Thyroid gland (tissue), 4 donors: ENCODE measurements at regions of chr1 and their contacts with region 1.

Region 1: GRCh38 chr1:110630839-110631663 is 24.9 kb upstream of the KCNA2 start:
- DNase-seq: peak; percentile 59 to 77
- H3K4me3 ChIP-seq: no peak overlapping the region
- H3K27ac ChIP-seq: no peak overlapping the region
- H3K4me1 ChIP-seq: peaks cover 0 to 8% of the 10 kb centered on the region in 2 donors
- H3K27me3 ChIP-seq: no peaks in the 10 kb centered on the region
- CTCF ChIP-seq: peak; percentile 35 to 87 (median 67)
- POLR2A ChIP-seq: no peak

Region 2: DNA sequence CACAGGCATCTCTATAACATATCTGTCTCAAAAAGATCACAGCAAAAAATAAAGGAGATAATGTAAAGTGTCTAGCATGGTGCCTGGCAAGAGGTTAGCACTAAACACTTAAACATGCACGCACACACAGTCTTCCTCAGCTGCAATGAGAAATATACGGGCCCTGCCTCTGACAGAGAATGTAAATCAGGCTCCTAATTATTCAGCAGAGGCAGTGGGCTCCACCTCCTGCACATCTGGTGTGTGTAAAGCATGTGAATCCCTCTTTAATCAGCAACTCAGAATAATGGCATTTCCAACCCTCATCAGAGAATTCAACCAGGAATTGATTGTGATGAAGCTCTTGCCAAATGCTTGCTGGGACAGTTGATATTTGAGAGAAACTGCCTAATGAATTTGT is 129.3 kb after region 1 on chr1:
- intact Hi-C with region 1: loop called (anchors 5 kb)
- DNase-seq: no peak
- H3K4me3 ChIP-seq: no peak overlapping the region
- H3K27ac ChIP-seq: no peak overlapping the region
- H3K4me1 ChIP-seq: no peaks in the 10 kb centered on the region
- H3K27me3 ChIP-seq: no peaks in the 10 kb centered on the region
- CTCF ChIP-seq: no peak
- POLR2A ChIP-seq: no peak

Region 3: DNA sequence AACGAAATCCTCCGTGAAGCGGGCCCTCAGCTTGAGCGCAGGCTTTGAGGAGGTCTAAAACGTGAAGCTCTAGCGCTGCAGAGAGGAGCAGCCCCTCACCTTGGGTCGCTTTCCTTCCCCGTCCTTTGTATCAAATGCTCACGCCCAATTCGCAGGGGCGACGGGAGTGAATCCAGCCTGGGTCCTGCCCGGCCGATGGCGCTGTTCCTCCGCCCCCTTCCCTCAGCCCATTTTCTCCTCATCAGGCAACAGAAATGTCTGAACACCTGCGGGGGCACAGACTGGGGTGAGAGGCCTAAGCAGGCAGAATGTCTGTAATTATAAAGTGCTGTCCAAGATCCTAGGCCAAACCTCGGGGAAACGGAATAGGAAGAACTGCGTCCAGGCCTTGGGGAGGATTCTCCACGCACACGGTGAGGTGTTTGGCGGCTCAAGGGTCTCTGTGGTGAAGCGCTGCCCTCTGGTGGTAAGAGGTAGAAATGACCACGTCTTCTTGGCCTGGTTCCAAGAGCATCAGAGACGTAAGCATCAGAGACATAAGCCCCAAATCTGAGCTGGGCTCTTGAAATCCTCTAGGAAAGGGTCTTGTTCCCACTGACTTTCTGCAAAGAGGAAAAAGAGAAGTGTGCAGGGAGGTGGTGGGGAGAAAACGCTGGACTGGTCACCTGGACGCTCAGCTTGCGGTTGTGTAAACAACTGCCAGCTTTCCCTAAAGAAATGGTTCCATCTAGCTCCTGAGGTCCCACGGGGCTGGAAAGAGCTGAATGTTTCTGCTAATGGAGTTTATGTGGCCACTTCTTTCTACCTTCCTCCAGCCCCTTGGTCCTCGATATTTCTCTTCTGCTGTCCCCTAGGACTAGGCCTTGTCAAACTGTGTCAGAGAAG is 149.8 kb after region 1 on chr1:
- intact Hi-C with region 1: loop called (anchors 5 kb)
- DNase-seq: peak; percentile 58 to 67
- H3K4me3 ChIP-seq: no peak overlapping the region
- H3K27ac ChIP-seq: no peak overlapping the region
- H3K4me1 ChIP-seq: no peaks in the 10 kb centered on the region
- H3K27me3 ChIP-seq: no peaks in the 10 kb centered on the region
- CTCF ChIP-seq: peak; percentile 58 to 81 (median 78)
- POLR2A ChIP-seq: no peak